CD8-positive, alpha-beta T cell (primary cell): ENCODE measurements at regions of chr20 and their contacts with region 1.

Region 1: GRCh38 chr20:32207626-32208498 is at the starts of genes PLAGL2 and POFUT1:
- DNase-seq: peak; percentile 73 to 94 (median 86)
- ATAC-seq: peak; percentile 96
- H3K4me3 ChIP-seq: peak within 1 kb of the TSS; percentile 84 to 86
- H3K4me3 Mint-ChIP-seq: peak within 1 kb of the TSS; percentile 94
- H3K27ac ChIP-seq: peak within 1 kb of the TSS; percentile 68 to 70
- H3K27ac Mint-ChIP-seq: peak within 1 kb of the TSS; percentile 92
- H3K4me1 ChIP-seq: peaks cover 53% of the 10 kb centered on the region
- H3K4me1 Mint-ChIP-seq: peaks cover 82% of the 10 kb centered on the region
- H3K27me3 ChIP-seq: no peaks in the 10 kb centered on the region
- H3K27me3 Mint-ChIP-seq: no peaks in the 10 kb centered on the region
- CTCF ChIP-seq: no peak
- total RNA-seq, gene PLAGL2: 15.8 to 16.9 TPM
- total RNA-seq, gene POFUT1: 5.1 to 6.3 TPM

Region 2: GRCh38 chr20:32277361-32278198 is 69.7 kb after region 1 on chr20 and contains the start of gene KIF3B:
- CTCF ChIA-PET with region 1: no interaction called
- POLR2A ChIA-PET with region 1: no interaction called
- intact Hi-C with region 1: loop called (anchors 1 to 2 kb)
- DNase-seq: peak; percentile 68 to 94 (median 87)
- ATAC-seq: peak; percentile 85
- H3K4me3 ChIP-seq: peak within 1 kb of the TSS; percentile 91 to 97
- H3K4me3 Mint-ChIP-seq: peak within 1 kb of the TSS; percentile 90
- H3K27ac ChIP-seq: peak within 1 kb of the TSS; percentile 64 to 86
- H3K27ac Mint-ChIP-seq: peak within 1 kb of the TSS; percentile 93
- H3K4me1 ChIP-seq: peaks cover 20% of the 10 kb centered on the region
- H3K4me1 Mint-ChIP-seq: peaks cover 44% of the 10 kb centered on the region
- H3K27me3 ChIP-seq: no peaks in the 10 kb centered on the region
- H3K27me3 Mint-ChIP-seq: no peaks in the 10 kb centered on the region
- CTCF ChIP-seq: no peak
- total RNA-seq, gene KIF3B: 7.1 to 8.1 TPM

Region 3: DNA sequence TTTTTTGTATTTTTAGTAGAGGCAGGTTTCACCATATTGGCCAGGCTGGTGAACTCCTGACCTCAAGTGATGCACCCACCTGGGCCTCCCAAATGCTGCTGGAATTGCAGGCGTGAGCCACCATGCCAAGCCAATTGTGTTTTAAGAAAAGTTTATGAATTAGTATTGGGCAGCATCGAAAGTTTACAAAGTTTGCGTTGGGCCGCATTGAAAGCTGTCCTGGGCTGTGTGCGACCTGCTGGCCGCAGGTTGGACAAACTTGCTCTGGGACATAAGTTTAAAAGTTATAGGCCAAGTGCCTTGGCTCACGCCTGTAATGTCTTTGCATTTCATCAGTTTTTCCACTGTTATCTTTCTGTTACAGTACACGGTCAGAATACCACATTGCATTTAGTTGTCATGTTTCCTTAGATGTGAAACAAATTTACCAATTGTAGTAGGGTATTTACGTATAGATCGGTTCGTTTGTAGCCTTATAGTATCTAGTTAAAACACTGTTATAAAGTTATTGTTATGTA is 189.8 kb after region 1 on chr20:
- CTCF ChIA-PET with region 1: no interaction called
- POLR2A ChIA-PET with region 1: no interaction called
- intact Hi-C with region 1: no loop called
- DNase-seq: no peak
- ATAC-seq: no peak
- H3K4me3 ChIP-seq: no peak overlapping the region
- H3K4me3 Mint-ChIP-seq: no peak overlapping the region
- H3K27ac ChIP-seq: no peak overlapping the region
- H3K27ac Mint-ChIP-seq: no peak overlapping the region
- H3K4me1 ChIP-seq: no peaks in the 10 kb centered on the region
- H3K4me1 Mint-ChIP-seq: peaks cover 49% of the 10 kb centered on the region
- H3K27me3 ChIP-seq: no peaks in the 10 kb centered on the region
- H3K27me3 Mint-ChIP-seq: no peaks in the 10 kb centered on the region
- CTCF ChIP-seq: no peak